AG04449 (cell line): ENCODE measurements at regions of chr1 and their contacts with region 1.

Region 1: GRCh38 chr1:112866151-112866550 is 89.8 kb downstream of the SLC16A1 start:
- DNase-seq: no peak
- H3K4me3 ChIP-seq: no peak overlapping the region
- CTCF ChIP-seq: no peak

Region 2: GRCh38 chr1:112882271-112882744 is 16.2 kb after region 1 on chr1:
- CTCF ChIA-PET with region 1: interaction called, 41 read pairs
- POLR2A ChIA-PET with region 1: no interaction called
- DNase-seq: no peak
- H3K4me3 ChIP-seq: no peak overlapping the region
- CTCF ChIP-seq: no peak

Region 3: GRCh38 chr1:112923956-112924349 is 57.8 kb after region 1 on chr1:
- CTCF ChIA-PET with region 1: no interaction called
- POLR2A ChIA-PET with region 1: no interaction called
- DNase-seq: no peak
- H3K4me3 ChIP-seq: no peak overlapping the region
- CTCF ChIP-seq: no peak